Heart right ventricle (tissue), 16 donors: ENCODE measurements at regions of chrX and their contacts with region 1.

Region 1: GRCh38 chrX:42047886-42048285 is 124.5 kb upstream of the CASK start:
- DNase-seq: no peak
- ATAC-seq: no peak
- H3K4me3 ChIP-seq: no peak overlapping the region
- H3K27ac ChIP-seq: no peak overlapping the region
- H3K4me1 ChIP-seq: no peaks in the 10 kb centered on the region
- H3K27me3 ChIP-seq: peaks cover 0 to 13% (median 0%) of the 10 kb centered on the region in 7 donors
- CTCF ChIP-seq: no peak

Region 2: DNA sequence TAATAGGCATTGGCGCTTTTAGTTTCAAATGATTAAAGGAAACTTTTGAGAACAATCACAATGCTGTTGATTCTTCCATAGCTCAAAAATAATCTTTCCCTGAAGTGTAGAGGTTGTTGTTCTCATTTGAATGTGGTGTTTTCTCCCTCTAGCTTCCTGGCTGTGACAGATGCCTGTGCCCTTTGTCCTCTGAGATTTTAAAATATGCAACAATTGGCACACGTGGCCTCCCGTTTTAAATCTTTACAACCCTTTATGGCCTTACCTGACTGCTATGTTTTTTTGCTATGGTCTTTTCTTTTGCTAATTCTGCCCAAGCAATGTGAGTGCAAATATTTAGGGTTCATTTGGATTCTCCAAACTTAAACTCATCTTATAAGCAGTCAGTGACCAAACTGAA is 101.7 kb before region 1 on chrX:
- intact Hi-C with region 1: no loop called
- DNase-seq: no peak
- ATAC-seq: no peak
- H3K4me3 ChIP-seq: no peak overlapping the region
- H3K27ac ChIP-seq: no peak overlapping the region
- H3K4me1 ChIP-seq: no peaks in the 10 kb centered on the region
- H3K27me3 ChIP-seq: peaks cover 0 to 42% (median 0%) of the 10 kb centered on the region in 7 donors
- CTCF ChIP-seq: no peak

Region 3: GRCh38 chrX:43405191-43405590 is 1357.3 kb after region 1 on chrX:
- intact Hi-C with region 1: loop called in 1 of 10 experiments (anchors 10 kb)
- DNase-seq: no peak
- ATAC-seq: no peak
- H3K4me3 ChIP-seq: no peak overlapping the region
- H3K27ac ChIP-seq: no peak overlapping the region
- H3K4me1 ChIP-seq: no peaks in the 10 kb centered on the region
- H3K27me3 ChIP-seq: no peaks in the 10 kb centered on the region
- CTCF ChIP-seq: no peak

Region 4: DNA sequence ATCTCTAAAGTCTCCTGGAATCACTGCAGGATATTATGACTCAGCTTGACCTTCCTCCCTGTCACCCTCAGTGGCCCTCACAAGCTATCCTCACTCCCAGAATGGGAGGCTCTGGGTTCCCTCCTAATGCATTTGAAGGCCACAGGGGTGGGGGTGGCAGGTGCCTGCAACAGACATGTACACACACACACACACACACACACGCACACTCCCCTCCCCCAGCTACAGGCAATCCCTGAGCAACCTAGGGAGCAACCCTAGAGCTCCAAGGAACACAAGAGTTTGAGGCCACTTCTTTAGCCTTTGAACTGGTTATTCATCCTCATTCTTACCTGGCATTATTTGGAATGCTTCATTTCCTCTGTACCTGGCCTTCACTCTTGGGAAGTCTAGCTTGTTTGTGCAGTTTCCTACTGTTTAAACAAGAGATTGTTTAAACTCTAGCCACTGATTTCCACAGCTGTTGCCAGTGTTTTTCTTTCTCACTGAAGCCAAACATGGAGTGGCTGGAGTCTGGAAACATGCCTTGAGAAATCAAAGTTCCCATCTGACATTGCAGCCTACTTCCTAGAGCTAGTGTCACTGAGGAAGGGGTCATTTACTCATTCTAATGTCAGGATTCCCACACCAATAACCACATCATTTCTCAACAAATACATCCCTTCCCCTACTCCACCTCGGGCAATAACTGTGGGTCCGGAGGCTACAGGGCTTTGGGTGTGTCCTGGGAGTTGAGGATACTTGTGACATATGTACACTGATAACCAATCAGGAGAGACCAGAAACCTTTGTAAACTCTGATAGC is 1645.9 kb after region 1 on chrX:
- intact Hi-C with region 1: no loop called
- DNase-seq: no peak
- ATAC-seq: peak in 6 of 8 donors; percentile 16 to 61 (median 46)
- H3K4me3 ChIP-seq: no peak overlapping the region
- H3K27ac ChIP-seq: peak overlapping the region in 5 of 10 donors; percentile 13 to 48 (median 28)
- H3K4me1 ChIP-seq: peaks cover 0 to 23% (median 0%) of the 10 kb centered on the region in 9 donors
- H3K27me3 ChIP-seq: peaks cover 0 to 17% (median 0%) of the 10 kb centered on the region in 7 donors
- CTCF ChIP-seq: no peak